Naive thymus-derived CD4-positive, alpha-beta T cell (primary cell): ENCODE measurements at regions of chr2 and their contacts with region 1.

Region 1: DNA sequence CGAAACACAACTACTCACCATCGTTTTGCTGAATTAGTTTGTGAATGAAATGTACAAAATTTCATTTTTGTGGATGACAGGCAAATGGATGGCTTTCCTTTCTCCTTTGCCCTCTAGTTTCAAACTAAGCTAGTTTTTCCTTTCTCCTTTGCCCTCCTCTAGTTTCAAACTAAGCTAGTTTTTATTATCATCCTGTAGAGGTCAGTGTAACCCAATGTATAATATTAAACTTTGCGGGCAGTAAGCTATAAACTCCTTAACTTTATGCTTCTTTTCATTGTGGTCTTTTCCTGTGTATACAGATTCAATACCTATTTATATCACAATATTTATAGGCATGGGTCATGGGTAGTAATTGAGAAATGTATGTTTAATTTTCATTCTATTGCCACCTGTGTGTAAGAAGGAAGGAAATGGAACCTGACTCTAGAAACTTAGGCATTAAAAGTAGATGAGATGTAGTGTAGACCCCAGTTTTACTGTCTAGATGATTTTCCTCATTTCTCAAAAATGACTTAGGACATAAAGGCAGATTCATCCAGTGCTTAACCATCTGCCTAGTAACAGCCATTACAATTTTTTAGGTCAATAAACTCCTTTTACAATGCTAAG is 58.1 kb downstream of the MAP3K19 start:
- DNase-seq: peak in 5 of 9 donors; percentile 13 to 35 (median 23)
- ATAC-seq: no peak
- H3K4me3 ChIP-seq: no peak overlapping the region
- H3K4me3 Mint-ChIP-seq: no peak overlapping the region
- H3K27ac ChIP-seq: no peak overlapping the region
- H3K27ac Mint-ChIP-seq: no peak overlapping the region
- H3K4me1 ChIP-seq: no peaks in the 10 kb centered on the region
- H3K4me1 Mint-ChIP-seq: no peaks in the 10 kb centered on the region
- H3K27me3 ChIP-seq: no peaks in the 10 kb centered on the region
- H3K27me3 Mint-ChIP-seq: peaks cover 0 to 22% (median 14%) of the 10 kb centered on the region in 5 donors

Region 2: GRCh38 chr2:135473567-135473966 is 484.5 kb after region 1 on chr2:
- CTCF ChIA-PET with region 1: no interaction called
- POLR2A ChIA-PET with region 1: no interaction called
- intact Hi-C with region 1: loop called in 1 of 2 experiments (anchors 5 kb)
- DNase-seq: peak in 6 of 9 donors; percentile 2 to 28 (median 20)
- ATAC-seq: peak; percentile 38
- H3K4me3 ChIP-seq: no peak overlapping the region
- H3K4me3 Mint-ChIP-seq: no peak overlapping the region
- H3K27ac ChIP-seq: no peak overlapping the region
- H3K27ac Mint-ChIP-seq: no peak overlapping the region
- H3K4me1 ChIP-seq: no peaks in the 10 kb centered on the region
- H3K4me1 Mint-ChIP-seq: no peaks in the 10 kb centered on the region
- H3K27me3 ChIP-seq: no peaks in the 10 kb centered on the region
- H3K27me3 Mint-ChIP-seq: no peaks in the 10 kb centered on the region

Region 3: DNA sequence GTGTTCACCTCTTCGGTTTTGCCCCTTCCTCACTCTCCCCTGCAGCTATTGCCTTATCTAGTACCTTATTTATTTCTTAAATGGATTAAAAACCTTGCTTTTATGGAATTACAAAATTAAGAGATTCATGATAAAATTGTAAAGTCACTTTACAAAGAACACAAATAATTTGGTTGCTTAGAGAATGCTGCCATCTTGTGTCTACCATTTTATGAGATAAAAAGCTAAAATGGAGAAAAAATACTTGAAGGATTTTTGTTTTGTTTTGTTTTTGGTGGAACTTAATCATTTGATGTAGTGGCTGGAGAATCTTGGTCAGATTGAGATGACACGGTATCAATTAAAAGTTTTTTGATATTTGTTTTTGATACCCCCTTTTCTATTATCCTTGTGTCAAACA is 611.8 kb after region 1 on chr2:
- CTCF ChIA-PET with region 1: interaction called, 8 read pairs
- POLR2A ChIA-PET with region 1: no interaction called
- intact Hi-C with region 1: loop called in 1 of 2 experiments (anchors 1 kb)
- DNase-seq: peak in 4 of 9 donors; percentile 1 to 20 (median 12)
- ATAC-seq: no peak
- H3K4me3 ChIP-seq: no peak overlapping the region
- H3K4me3 Mint-ChIP-seq: no peak overlapping the region
- H3K27ac ChIP-seq: no peak overlapping the region
- H3K27ac Mint-ChIP-seq: no peak overlapping the region
- H3K4me1 ChIP-seq: no peaks in the 10 kb centered on the region
- H3K4me1 Mint-ChIP-seq: peaks cover 2 to 26% (median 8%) of the 10 kb centered on the region in 7 donors
- H3K27me3 ChIP-seq: no peaks in the 10 kb centered on the region
- H3K27me3 Mint-ChIP-seq: no peaks in the 10 kb centered on the region

Region 4: GRCh38 chr2:135797497-135798274 is 808.6 kb after region 1 on chr2:
- CTCF ChIA-PET with region 1: interaction called, 15 read pairs
- POLR2A ChIA-PET with region 1: no interaction called
- intact Hi-C with region 1: loop called (anchors 1 to 5 kb)
- DNase-seq: peak; percentile 46 to 78 (median 69)
- ATAC-seq: peak; percentile 92
- H3K4me3 ChIP-seq: no peak overlapping the region
- H3K4me3 Mint-ChIP-seq: peak overlapping the region in 1 of 10 donors; percentile 58
- H3K27ac ChIP-seq: no peak overlapping the region
- H3K27ac Mint-ChIP-seq: peak overlapping the region in 1 of 9 donors; percentile 65
- H3K4me1 ChIP-seq: peaks cover 0 to 6% of the 10 kb centered on the region in 2 donors
- H3K4me1 Mint-ChIP-seq: peaks cover 0 to 20% (median 14%) of the 10 kb centered on the region in 7 donors
- H3K27me3 ChIP-seq: no peaks in the 10 kb centered on the region
- H3K27me3 Mint-ChIP-seq: no peaks in the 10 kb centered on the region

Region 5: GRCh38 chr2:136527560-136527959 is 1538.5 kb after region 1 on chr2:
- CTCF ChIA-PET with region 1: no interaction called
- POLR2A ChIA-PET with region 1: no interaction called
- intact Hi-C with region 1: no loop called
- DNase-seq: no peak
- ATAC-seq: no peak
- H3K4me3 ChIP-seq: no peak overlapping the region
- H3K4me3 Mint-ChIP-seq: no peak overlapping the region
- H3K27ac ChIP-seq: no peak overlapping the region
- H3K27ac Mint-ChIP-seq: no peak overlapping the region
- H3K4me1 ChIP-seq: no peaks in the 10 kb centered on the region
- H3K4me1 Mint-ChIP-seq: no peaks in the 10 kb centered on the region
- H3K27me3 ChIP-seq: no peaks in the 10 kb centered on the region
- H3K27me3 Mint-ChIP-seq: peaks cover 0 to 24% (median 18%) of the 10 kb centered on the region in 5 donors